GM12878 (cell line): ENCODE measurements at regions of chr13 and their contacts with region 1.

Region 1: DNA sequence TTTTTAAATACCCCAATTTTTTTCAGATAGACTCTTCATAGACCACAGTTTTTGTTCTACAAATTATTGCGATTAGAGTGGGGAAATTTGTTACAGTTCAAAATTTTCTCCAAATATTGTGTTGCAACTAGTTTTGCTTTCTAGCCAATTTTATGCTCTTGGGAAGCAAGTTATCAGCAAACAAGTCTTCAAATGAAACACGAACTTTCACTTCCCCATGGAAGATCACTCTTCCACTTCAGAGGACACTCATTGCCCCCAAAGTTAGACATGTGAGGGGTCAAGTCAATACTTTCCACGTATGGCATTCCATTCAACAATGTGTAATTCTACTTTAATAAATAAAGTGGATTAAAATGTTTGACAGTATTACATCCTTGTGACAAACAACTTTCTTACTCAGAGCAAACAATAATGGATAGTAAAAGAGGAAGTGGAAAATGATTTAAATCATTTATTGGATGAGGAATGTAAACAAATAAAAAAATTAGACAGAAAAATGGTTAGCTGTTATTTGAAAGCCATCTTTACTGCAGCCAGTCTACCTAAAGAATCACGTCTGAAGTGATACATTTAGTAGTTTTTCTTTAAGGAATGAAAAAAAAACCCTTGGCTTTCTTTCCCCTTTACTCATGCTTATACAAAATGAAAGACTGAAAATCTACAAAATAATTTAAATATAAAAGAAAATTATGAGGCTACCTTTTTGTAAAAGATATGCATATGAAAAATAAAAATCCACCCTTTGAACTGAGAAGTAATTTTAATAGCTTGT is 41.2 kb upstream of the TNFSF11 start:
- DNase-seq: peak; percentile 70
- ATAC-seq: peak; percentile 91
- H3K4me3 ChIP-seq: peak overlapping the region; percentile 35; the same call in 1 of the 2 replicates
- H3K27ac ChIP-seq: peak overlapping the region; percentile 49
- H3K4me1 ChIP-seq: peaks cover 16% of the 10 kb centered on the region
- H3K27me3 ChIP-seq: no peaks in the 10 kb centered on the region
- CTCF ChIP-seq: no peak
- EP300 ChIP-seq: peak; percentile 65 to 90; a peak in 3 of 4 replicates
- POLR2A ChIP-seq: no peak
- RAD21 ChIP-seq: no peak

Region 2: GRCh38 chr13:42412812-42413483 is 119.8 kb before region 1 on chr13:
- CTCF ChIA-PET with region 1: no interaction called
- POLR2A ChIA-PET with region 1: no interaction called
- RAD21 ChIA-PET with region 1: no interaction called
- SMC1A ChIA-PET with region 1: interaction called, 3 read pairs
- in situ Hi-C with region 1: no loop called
- intact Hi-C with region 1: loop called (anchors 2 kb)
- DNase-seq: peak; percentile 72
- ATAC-seq: peak; percentile 83
- H3K4me3 ChIP-seq: no peak overlapping the region
- H3K27ac ChIP-seq: peak overlapping the region; percentile 96
- H3K4me1 ChIP-seq: peaks cover 46% of the 10 kb centered on the region
- H3K27me3 ChIP-seq: no peaks in the 10 kb centered on the region
- CTCF ChIP-seq: no peak
- EP300 ChIP-seq: peak; percentile 93
- POLR2A ChIP-seq: no peak
- RAD21 ChIP-seq: no peak

Region 3: GRCh38 chr13:42497798-42498197 is 35.0 kb before region 1 on chr13:
- CTCF ChIA-PET with region 1: interaction called, 3 read pairs
- POLR2A ChIA-PET with region 1: interaction called, 3 read pairs
- RAD21 ChIA-PET with region 1: interaction called, 5 read pairs
- SMC1A ChIA-PET with region 1: interaction called, 4 read pairs
- in situ Hi-C with region 1: no loop called
- intact Hi-C with region 1: loop called (anchors 5 kb)
- DNase-seq: peak; percentile 88
- ATAC-seq: peak; percentile 90
- H3K4me3 ChIP-seq: no peak overlapping the region
- H3K27ac ChIP-seq: peak overlapping the region; percentile 85
- H3K4me1 ChIP-seq: peaks cover 33% of the 10 kb centered on the region
- H3K27me3 ChIP-seq: no peaks in the 10 kb centered on the region
- CTCF ChIP-seq: no peak
- EP300 ChIP-seq: peak in 1 of 2 experiments; percentile 69; a peak in 1 of 4 replicates
- POLR2A ChIP-seq: no peak
- RAD21 ChIP-seq: peak; percentile 36; the same call in 1 of the 2 replicates

Region 4: DNA sequence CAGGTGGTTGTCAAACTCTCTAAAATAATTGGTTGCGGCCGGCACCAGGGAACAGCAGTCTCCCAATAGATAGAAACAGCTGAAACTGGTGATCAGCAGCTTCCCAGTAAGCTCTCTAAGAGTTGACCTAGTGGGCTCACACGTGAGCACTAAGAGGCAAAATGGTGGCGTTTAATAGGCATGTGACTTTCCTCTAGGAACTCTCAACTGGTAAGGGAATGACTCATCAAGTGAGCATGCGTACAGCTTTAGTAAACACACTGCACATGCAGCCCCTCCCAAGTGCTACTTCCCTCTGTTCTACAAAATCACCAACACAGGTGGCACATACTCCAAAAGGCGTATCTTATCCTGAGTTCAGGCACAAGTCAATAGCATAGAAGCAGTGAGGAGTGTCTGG is 82.9 kb after region 1 on chr13:
- CTCF ChIA-PET with region 1: no interaction called
- POLR2A ChIA-PET with region 1: no interaction called
- RAD21 ChIA-PET with region 1: no interaction called
- SMC1A ChIA-PET with region 1: no interaction called
- in situ Hi-C with region 1: no loop called
- intact Hi-C with region 1: no loop called
- DNase-seq: no peak
- ATAC-seq: no peak
- H3K4me3 ChIP-seq: no peak overlapping the region
- H3K27ac ChIP-seq: no peak overlapping the region
- H3K4me1 ChIP-seq: no peaks in the 10 kb centered on the region
- H3K27me3 ChIP-seq: no peaks in the 10 kb centered on the region
- CTCF ChIP-seq: no peak
- EP300 ChIP-seq: no peak
- POLR2A ChIP-seq: no peak
- RAD21 ChIP-seq: no peak